ENCODE measurements at regions of chr12 and their contacts with region 1.

Region 1: DNA sequence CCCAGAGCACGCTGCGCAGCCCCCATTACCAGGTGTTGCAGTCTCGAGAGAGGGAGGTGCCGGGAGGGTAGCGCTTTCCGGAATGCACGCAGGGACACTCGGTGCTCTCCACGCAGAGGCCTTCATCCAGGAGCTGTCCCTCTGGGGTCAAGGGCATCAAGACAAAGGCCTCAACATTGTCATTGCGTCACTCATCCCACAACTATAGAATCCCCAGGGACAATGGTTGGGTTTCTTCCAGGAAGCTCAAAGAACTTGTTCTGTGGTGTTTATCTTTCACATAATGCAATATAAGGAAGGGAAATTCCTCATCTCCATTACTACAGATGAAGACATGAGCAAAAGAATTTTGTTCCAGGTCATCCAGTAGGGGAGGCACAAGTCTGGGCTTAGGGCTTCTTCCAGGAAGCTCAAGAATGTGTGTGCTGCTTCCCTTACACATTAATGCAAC is 52.1 kb downstream of the VWF start:
- DNase-seq: peak in 1 of 2 experiments; percentile 89
- H3K4me3 ChIP-seq: no peak overlapping the region
- H3K27ac ChIP-seq: no peak overlapping the region
- H3K4me1 ChIP-seq: peaks cover 10% of the 10 kb centered on the region
- H3K27me3 ChIP-seq: no peaks in the 10 kb centered on the region
- CTCF ChIP-seq: no peak; the same call in 1 of the 2 replicates

Region 2: GRCh38 chr12:6056406-6057240 is 15.7 kb before region 1 on chr12:
- CTCF ChIA-PET with region 1: interaction called, 10 read pairs
- POLR2A ChIA-PET with region 1: no interaction called
- intact Hi-C with region 1: no loop called
- DNase-seq: no peak
- H3K4me3 ChIP-seq: no peak overlapping the region
- H3K27ac ChIP-seq: no peak overlapping the region
- H3K4me1 ChIP-seq: peaks cover 7% of the 10 kb centered on the region; the same call in 1 of the 2 replicates
- H3K27me3 ChIP-seq: no peaks in the 10 kb centered on the region
- CTCF ChIP-seq: no peak; the same call in 1 of the 2 replicates